ENCODE measurements at regions of chr5 and their contacts with region 1.

Region 1: DNA sequence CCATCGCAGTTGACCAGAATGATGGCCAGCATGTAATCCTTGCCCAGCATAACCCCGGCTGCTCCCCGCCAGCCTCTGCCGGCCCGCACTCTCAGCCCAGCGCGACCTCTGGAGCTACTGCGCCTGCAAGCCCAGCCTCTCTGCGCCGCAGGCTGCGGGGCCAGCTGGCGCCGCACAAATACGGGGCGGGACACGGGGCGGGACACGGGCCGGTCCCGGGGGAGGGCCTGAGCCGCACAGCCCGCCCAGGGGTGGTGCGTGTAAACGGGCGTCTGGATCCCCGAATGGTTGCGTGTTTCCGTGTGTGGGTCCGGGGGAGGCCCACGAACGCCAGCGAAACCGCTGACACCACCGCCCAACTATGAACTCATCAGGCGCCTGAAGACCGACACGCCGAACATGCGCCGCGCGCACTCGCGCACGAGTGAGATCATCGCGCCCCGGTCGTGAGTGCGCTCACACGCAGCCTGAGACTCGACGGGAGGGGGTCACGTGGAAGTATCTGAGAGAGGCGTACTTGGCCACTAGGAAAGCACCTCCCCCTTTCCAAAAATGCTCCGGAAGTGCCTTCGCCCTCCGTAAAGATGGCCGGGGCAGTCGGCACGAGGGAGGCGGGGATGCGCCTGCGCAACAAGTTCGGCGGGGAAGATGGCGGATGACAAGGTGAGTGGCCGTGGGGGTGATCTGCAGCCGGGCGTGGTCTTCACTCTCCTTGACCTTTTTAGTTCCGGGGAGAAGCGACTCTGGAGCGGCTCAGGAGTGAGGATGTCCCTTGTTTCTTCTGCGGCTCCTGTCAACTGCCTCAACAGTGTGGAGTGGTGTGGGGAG is at the starts of genes APBB3 and SLC35A4:
- DNase-seq: peak; percentile 97
- ATAC-seq: peak; percentile 93
- H3K4me3 ChIP-seq: peak within 1 kb of the TSS; percentile 72
- H3K27ac ChIP-seq: peak within 1 kb of the TSS; percentile 96
- H3K4me1 ChIP-seq: peaks cover 30% of the 10 kb centered on the region
- H3K27me3 ChIP-seq: no peaks in the 10 kb centered on the region
- CTCF ChIP-seq: no peak
- total RNA-seq, gene APBB3: 25.8 TPM
- total RNA-seq, gene SLC35A4: 89.4 TPM

Region 2: GRCh38 chr5:140418862-140419520 is 145.4 kb before region 1 on chr5:
- intact Hi-C with region 1: no loop called
- DNase-seq: no peak
- ATAC-seq: no peak
- H3K4me3 ChIP-seq: no peak overlapping the region
- H3K27ac ChIP-seq: no peak overlapping the region
- H3K4me1 ChIP-seq: peaks cover 6% of the 10 kb centered on the region
- H3K27me3 ChIP-seq: no peaks in the 10 kb centered on the region
- CTCF ChIP-seq: no peak

Region 3: GRCh38 chr5:140639148-140639979 is 75.0 kb after region 1 on chr5 and contains the start of gene TMCO6:
- intact Hi-C with region 1: loop called (anchors 10 kb)
- DNase-seq: peak; percentile 99
- ATAC-seq: peak; percentile 99
- H3K4me3 ChIP-seq: peak within 1 kb of the TSS; percentile 91
- H3K27ac ChIP-seq: peak within 1 kb of the TSS; percentile 93
- H3K4me1 ChIP-seq: peaks cover 12% of the 10 kb centered on the region
- H3K27me3 ChIP-seq: no peaks in the 10 kb centered on the region
- CTCF ChIP-seq: peak; percentile 74
- total RNA-seq, gene TMCO6: 10.7 TPM

Measured in upper lobe of right lung (tissue), 1 donor.